ENCODE measurements at regions of chr14 and their contacts with region 1.

Region 1: GRCh38 chr14:106831322-106831720 is 1304.9 kb downstream of the TMEM121 start:
- DNase-seq: peak; percentile 37
- ATAC-seq: peak; percentile 67
- H3K4me3 Mint-ChIP-seq: no peak overlapping the region
- H3K27ac Mint-ChIP-seq: no peak overlapping the region
- H3K4me1 Mint-ChIP-seq: peaks cover 12% of the 10 kb centered on the region
- H3K27me3 Mint-ChIP-seq: no peaks in the 10 kb centered on the region
- CTCF ChIP-seq: no peak

Region 2: DNA sequence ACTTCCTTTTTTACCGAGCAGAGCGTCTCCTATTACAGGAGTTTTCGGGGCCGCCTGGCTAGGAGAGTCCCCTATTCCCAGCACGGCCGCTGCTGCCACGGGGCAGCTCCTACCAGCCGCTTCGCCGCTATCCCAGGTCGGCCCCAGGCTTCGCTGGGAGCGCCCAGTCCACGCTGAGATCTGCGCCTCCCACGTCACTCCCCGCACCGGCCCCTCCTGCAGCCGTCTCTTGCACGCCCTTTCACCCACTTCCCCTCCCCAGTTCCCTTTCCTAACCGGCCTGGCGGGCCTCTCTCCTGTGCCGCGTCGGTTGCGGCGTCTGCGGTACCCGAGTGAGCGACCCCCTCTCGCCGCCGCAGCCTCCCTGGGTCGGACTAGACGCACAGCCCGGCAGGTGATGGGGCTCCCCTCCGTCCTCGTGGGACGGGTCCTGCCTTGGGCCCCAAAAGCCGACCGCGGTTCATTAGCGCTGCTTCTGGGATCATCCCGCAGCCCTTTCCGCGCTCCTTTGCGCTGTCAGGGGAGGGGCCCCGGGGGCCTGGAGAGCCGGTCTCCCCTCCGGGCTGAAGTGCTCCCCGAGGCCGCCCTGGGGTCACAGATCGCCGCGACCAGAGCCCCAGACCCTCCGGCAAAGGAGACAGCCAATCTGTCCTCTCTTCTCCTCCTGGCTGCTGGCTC is 13.4 kb after region 1 on chr14:
- CTCF ChIA-PET with region 1: interaction called, 50 read pairs
- POLR2A ChIA-PET with region 1: interaction called, 5 read pairs
- intact Hi-C with region 1: loop called (anchors 1 kb)
- DNase-seq: peak; percentile 70
- ATAC-seq: peak; percentile 75
- H3K4me3 Mint-ChIP-seq: peak overlapping the region; percentile 96
- H3K27ac Mint-ChIP-seq: peak overlapping the region; percentile 97
- H3K4me1 Mint-ChIP-seq: peaks cover 73% of the 10 kb centered on the region
- H3K27me3 Mint-ChIP-seq: no peaks in the 10 kb centered on the region
- CTCF ChIP-seq: no peak

Region 3: DNA sequence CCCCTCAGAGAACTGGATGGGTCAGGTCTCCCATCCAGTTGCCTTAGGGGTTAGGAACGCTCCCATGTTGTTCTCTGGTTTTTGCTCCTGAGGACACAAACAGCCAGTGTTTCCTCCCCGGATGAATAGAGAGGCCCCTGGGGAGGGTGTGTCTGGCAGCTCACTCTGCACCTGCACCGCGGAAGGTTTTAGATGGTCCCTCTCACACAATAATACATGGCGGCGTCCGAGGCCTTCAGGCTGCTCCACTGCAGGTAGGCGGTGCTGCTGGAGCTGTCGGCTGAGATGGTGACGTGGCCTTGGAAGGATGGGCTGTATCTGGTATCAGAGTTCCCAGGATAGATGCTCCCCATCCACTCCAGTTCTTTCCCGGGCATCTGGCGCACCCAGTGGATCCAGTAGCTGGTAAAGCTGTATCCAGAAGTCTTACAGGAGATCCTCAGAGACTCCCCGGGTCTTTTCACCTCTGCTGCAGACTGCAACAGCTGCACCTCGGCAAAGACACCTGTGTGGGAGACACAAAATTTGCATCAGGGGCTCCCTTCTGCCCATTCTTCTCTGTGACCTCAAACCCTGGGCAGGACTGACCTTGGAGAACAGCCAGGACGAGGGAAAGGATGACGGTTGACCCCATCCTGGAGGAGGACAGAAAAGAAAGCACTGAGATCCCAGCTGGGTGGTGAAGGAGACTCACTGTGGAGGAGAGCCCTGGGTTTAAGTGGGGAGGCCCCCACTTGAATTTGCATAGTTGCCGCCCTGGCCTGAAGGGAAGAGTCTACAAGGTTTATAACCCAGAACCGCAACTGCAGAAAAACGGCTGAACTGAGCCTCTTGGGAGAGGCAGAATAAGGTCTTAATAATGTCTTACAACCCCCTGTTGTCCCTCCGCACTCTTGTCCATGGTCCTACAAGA is 19.8 kb after region 1 on chr14:
- CTCF ChIA-PET with region 1: interaction called, 35 read pairs
- POLR2A ChIA-PET with region 1: interaction called, 4 read pairs
- intact Hi-C with region 1: no loop called
- DNase-seq: peak; percentile 44
- ATAC-seq: peak; percentile 78
- H3K4me3 Mint-ChIP-seq: peak overlapping the region; percentile 90
- H3K27ac Mint-ChIP-seq: peak overlapping the region; percentile 97
- H3K4me1 Mint-ChIP-seq: peaks cover 78% of the 10 kb centered on the region
- H3K27me3 Mint-ChIP-seq: no peaks in the 10 kb centered on the region
- CTCF ChIP-seq: no peak